ENCODE measurements at regions of chr10 and their contacts with region 1.

Region 1: DNA sequence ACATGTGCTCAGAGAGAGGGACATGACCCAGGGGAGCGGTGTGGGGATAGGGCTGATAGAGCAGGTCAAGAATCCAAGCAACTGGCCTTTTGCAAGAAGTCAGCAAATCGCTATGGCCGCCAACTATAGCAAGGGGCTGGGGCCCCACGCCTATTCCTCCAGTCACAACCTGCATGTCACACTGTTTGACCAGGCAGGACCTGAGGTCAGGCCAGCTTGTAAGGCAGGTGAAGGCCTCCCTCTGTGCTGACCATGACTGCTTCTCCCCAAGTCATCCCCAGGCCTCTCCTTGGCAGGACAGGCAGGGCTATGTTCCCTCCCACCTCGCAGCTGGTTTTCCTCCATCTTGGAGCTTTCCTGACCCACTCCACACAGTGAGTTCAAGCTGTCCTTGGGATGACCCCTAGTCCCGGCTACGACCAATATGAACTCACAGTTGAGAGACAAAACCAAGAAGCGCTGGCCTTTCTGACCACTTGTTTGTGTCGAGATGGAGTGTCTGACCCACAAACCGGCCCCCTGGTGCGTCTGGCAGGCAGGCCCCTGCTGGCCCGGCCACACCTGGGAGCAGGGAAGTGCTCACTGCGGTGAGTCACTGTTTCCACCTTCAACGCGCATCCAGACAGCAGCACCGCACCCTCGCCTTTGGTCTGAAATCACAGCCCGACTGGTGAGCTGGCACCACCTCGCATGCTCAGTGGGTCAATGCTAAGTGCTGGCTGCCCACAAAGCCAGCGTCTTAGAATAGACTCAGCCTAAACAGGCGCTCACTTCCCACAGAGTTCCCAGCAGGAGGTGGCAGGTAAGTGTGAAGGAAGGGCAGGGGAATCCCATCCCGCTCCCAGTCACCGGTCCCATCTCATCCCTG is 81.4 kb downstream of the VWA2 start:
- DNase-seq: peak; percentile 100
- ATAC-seq: peak; percentile 93
- H3K4me3 ChIP-seq: peak overlapping the region; percentile 11 to 21; a peak in 2 of 4 replicates
- H3K27ac ChIP-seq: no peak overlapping the region; the same call in 1 of the 2 replicates
- H3K4me1 ChIP-seq: peaks cover 18 to 33% of the 10 kb centered on the region in 2 experiments
- H3K27me3 ChIP-seq: peaks cover 86% of the 10 kb centered on the region
- CTCF ChIP-seq: no peak
- POLR2A ChIP-seq: no peak
- RAD21 ChIP-seq: peak; percentile 41

Region 2: GRCh38 chr10:114437456-114438292 is 117.2 kb after region 1 on chr10:
- CTCF ChIA-PET with region 1: no interaction called
- POLR2A ChIA-PET with region 1: no interaction called
- RAD21 ChIA-PET with region 1: no interaction called
- intact Hi-C with region 1: loop called (anchors 5 kb)
- DNase-seq: no peak
- ATAC-seq: peak; percentile 81
- H3K4me3 ChIP-seq: no peak overlapping the region
- H3K27ac ChIP-seq: no peak overlapping the region
- H3K4me1 ChIP-seq: no peaks in the 10 kb centered on the region
- H3K27me3 ChIP-seq: no peaks in the 10 kb centered on the region
- CTCF ChIP-seq: peak; percentile 68 to 78 (median 71); a peak in 5 of 6 replicates
- POLR2A ChIP-seq: no peak
- RAD21 ChIP-seq: peak; percentile 73

Region 3: DNA sequence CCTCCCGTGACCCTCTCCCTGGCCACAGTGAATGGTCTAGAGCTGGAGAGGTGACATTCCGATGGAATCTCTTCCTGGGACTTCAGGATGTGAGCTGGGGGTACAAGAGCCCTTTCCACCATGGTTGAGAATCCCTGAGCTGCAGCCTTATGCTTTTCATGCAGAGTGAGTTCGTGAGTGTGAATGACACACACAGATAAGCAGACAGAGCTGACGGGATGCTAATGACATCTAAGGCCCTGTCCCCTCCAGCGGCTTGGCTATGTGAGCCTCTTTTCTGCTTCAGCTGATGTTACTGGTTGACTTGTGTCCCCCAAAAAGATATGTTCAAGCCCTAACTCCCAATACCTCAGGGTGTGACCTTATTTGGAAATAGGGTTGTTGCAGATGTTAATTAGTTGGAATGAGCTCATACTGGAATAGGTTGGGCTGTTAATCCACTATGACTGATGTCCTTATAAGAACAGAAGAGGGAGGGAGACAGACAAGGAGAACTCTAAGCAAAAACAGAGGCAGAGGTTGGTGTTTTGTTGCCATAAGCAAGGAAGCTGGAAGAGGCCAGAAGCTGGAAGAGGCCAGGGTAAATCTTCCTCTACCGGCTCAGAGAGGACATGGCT is 194.9 kb after region 1 on chr10:
- CTCF ChIA-PET with region 1: no interaction called
- POLR2A ChIA-PET with region 1: no interaction called
- RAD21 ChIA-PET with region 1: no interaction called
- intact Hi-C with region 1: no loop called
- DNase-seq: no peak
- ATAC-seq: no peak
- H3K4me3 ChIP-seq: no peak overlapping the region
- H3K27ac ChIP-seq: no peak overlapping the region
- H3K4me1 ChIP-seq: peaks cover 22 to 25% of the 10 kb centered on the region in 2 experiments
- H3K27me3 ChIP-seq: no peaks in the 10 kb centered on the region
- CTCF ChIP-seq: no peak
- POLR2A ChIP-seq: no peak
- RAD21 ChIP-seq: no peak